CD8-positive, alpha-beta T cell (primary cell): ENCODE measurements at regions of chr15 and their contacts with region 1.

Region 1: GRCh38 chr15:41774062-41774881 is at the start of gene MAPKBP1:
- DNase-seq: peak; percentile 93 to 100 (median 97)
- ATAC-seq: peak; percentile 90
- H3K4me3 ChIP-seq: peak within 1 kb of the TSS; percentile 70 to 91
- H3K4me3 Mint-ChIP-seq: peak within 1 kb of the TSS; percentile 95
- H3K27ac ChIP-seq: peak within 1 kb of the TSS; percentile 45 to 84
- H3K27ac Mint-ChIP-seq: peak within 1 kb of the TSS; percentile 95
- H3K4me1 ChIP-seq: peaks cover 46% of the 10 kb centered on the region
- H3K4me1 Mint-ChIP-seq: peaks cover 60% of the 10 kb centered on the region
- H3K27me3 ChIP-seq: no peaks in the 10 kb centered on the region
- H3K27me3 Mint-ChIP-seq: no peaks in the 10 kb centered on the region
- CTCF ChIP-seq: peak; percentile 47
- total RNA-seq, gene MAPKBP1: 24.2 to 25.3 TPM

Region 2: DNA sequence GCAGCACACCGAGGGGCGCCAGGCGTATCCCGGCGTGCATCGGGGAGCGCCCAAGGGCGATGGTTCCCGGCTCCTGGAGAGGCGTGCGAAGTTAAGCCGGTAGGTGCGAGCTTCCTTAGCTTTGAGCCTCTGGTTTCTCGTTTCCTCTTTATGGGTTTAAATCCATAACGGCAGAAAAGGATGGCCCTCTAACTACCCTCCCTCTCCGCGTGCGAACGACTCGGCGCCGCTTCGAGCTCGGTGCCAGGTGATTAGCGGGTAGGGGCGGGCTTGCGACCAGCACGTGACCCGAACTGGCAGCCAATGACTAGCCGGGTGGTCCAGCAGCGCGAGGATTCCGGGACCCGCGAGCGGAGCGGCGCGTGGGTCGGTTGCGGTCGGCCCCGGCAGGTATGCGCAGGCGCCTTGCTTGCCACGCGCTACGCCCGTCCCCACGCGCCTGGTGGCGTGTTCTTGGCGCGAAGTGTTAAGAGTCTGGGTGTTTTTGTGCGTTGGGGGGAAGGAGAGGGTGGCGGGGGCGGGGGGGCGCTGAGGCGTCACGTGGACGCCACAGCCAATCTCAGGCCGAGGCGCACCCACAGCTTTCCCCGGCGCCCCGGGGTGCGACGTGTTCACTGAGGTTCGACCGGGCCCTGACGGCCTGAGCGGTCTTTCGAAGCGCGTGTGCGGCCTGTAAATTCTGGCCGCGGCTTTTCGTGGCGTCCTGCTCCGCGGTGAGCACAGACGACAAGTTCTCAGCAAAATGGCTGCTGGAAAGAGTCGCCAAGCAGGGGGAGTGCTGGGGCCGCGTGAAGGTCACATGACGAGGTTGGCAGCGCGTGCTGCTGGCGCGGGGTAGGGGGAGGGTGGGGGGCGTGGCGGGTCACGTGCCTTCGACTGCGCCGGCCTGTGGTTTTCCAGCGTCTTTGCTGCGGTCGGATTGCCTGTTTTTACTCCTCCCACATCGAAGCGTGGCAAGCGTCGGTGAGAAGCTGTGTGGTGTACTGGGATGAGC is 152.8 kb before region 1 on chr15:
- CTCF ChIA-PET with region 1: no interaction called
- POLR2A ChIA-PET with region 1: interaction called, 4 read pairs
- intact Hi-C with region 1: loop called in 1 of 2 experiments (anchors 1 kb)
- DNase-seq: peak; percentile 47 to 88 (median 77)
- ATAC-seq: peak; percentile 79
- H3K4me3 ChIP-seq: peak overlapping the region; percentile 39 to 52
- H3K4me3 Mint-ChIP-seq: peak overlapping the region; percentile 72
- H3K27ac ChIP-seq: peak overlapping the region; percentile 11 to 54
- H3K27ac Mint-ChIP-seq: peak overlapping the region; percentile 57
- H3K4me1 ChIP-seq: peaks cover 13% of the 10 kb centered on the region
- H3K4me1 Mint-ChIP-seq: peaks cover 17% of the 10 kb centered on the region
- H3K27me3 ChIP-seq: no peaks in the 10 kb centered on the region
- H3K27me3 Mint-ChIP-seq: no peaks in the 10 kb centered on the region
- CTCF ChIP-seq: no peak

Region 3: DNA sequence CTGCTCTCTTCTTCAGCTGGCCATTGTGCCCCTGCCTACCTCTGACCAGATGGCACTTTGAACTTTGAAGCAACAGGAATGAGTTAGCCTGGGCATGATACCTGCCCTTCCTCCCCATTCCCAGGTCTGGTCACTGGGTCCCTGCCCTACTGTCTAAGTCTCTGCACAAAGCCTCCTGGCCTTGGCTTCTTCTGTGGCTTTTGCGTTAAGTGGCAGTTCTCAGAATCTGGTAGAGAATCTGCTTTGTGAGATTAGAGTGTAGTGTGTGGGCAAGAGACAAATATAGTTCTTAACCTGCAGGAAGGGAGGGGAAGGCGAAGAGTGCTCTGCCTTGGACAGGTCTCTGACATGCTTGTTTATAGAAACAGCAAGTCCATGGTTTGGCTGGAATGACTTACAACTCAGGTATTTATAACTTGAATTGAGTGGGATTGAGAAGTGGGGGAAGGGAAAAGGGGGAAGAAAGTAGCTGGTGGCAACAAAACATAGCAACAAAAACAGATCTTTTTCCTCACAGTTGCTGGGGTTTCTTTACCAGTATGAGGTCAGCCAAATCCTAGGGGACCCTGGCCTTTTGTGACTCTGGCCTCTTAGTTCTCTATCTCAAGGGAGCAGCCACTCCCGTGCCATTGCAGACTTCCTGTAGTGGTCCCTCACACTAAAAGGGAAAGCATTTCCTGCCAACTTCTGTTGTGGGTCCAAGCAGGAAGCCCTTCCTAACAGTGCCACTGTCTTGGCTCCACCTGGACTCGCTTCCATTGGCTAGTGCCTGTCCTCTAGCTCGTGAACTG is 16.7 kb after region 1 on chr15:
- CTCF ChIA-PET with region 1: interaction called, 45 read pairs
- POLR2A ChIA-PET with region 1: interaction called, 4 read pairs
- intact Hi-C with region 1: no loop called
- DNase-seq: no peak
- ATAC-seq: no peak
- H3K4me3 ChIP-seq: no peak overlapping the region
- H3K4me3 Mint-ChIP-seq: no peak overlapping the region
- H3K27ac ChIP-seq: peak overlapping the region in 1 of 2 experiments; percentile 10
- H3K27ac Mint-ChIP-seq: no peak overlapping the region
- H3K4me1 ChIP-seq: peaks cover 32% of the 10 kb centered on the region
- H3K4me1 Mint-ChIP-seq: peaks cover 48% of the 10 kb centered on the region
- H3K27me3 ChIP-seq: no peaks in the 10 kb centered on the region
- H3K27me3 Mint-ChIP-seq: no peaks in the 10 kb centered on the region
- CTCF ChIP-seq: no peak

Region 4: DNA sequence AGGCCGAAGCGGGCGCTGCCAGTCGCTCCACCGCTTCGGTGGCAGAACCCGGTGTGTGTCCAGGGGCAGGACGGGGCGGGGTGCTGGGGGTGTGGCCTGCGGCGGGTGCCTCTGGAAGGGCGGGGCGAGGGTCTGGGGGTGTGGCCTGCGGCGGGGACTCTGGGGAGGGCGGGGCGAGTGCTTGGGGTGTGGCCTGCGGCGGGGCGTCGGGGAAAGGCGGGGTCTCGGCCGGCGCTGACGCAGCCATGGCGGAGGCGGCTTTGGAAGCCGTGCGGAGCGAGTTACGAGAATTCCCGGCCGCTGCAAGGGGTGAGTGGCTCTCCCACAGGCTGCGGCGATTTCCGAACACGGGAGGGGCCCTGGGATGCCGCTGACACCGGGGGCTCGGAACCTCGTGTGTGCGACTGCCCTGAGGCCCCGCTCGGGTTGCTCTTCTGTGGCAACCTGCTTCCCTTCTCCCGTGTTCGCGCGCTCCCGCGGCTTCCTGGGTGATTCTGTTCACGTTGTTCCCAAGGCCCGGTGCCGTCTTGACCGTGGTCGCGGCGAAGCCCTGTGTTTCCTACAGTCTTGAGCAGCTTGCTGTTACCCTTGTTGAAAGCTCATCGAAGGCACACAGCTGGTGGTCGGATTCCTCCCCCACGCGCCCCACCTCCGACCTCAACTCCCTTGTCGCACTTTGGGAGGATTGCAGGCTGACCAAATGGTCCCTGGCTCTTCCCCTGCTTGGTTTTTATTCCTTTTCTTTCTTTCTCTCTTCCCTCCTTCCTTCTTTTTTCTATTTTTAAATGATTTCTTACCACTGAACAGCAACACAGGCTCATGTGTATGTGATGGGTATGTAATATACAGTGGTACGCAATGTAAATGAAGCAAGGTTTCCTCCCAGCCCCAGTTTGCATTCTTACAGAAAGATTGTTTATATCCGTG is 53.9 kb after region 1 on chr15 and contains the start of gene JMJD7:
- CTCF ChIA-PET with region 1: interaction called, 23 read pairs
- POLR2A ChIA-PET with region 1: interaction called, 9 read pairs
- intact Hi-C with region 1: loop called (anchors 1 kb)
- DNase-seq: peak; percentile 93 to 98 (median 95)
- ATAC-seq: peak; percentile 97
- H3K4me3 ChIP-seq: peak within 1 kb of the TSS; percentile 93 to 95
- H3K4me3 Mint-ChIP-seq: peak within 1 kb of the TSS; percentile 83
- H3K27ac ChIP-seq: peak within 1 kb of the TSS; percentile 74 to 87
- H3K27ac Mint-ChIP-seq: peak within 1 kb of the TSS; percentile 87
- H3K4me1 ChIP-seq: peaks cover 35% of the 10 kb centered on the region
- H3K4me1 Mint-ChIP-seq: peaks cover 44% of the 10 kb centered on the region
- H3K27me3 ChIP-seq: no peaks in the 10 kb centered on the region
- H3K27me3 Mint-ChIP-seq: no peaks in the 10 kb centered on the region
- CTCF ChIP-seq: no peak
- total RNA-seq, gene JMJD7: 27.5 to 38.3 TPM

Region 5: GRCh38 chr15:41930221-41930866 is 156.1 kb after region 1 on chr15:
- CTCF ChIA-PET with region 1: interaction called, 34 read pairs
- POLR2A ChIA-PET with region 1: interaction called, 19 read pairs
- intact Hi-C with region 1: loop called in 1 of 2 experiments (anchors 10 kb)
- DNase-seq: peak in 1 of 9 experiments; percentile 21
- ATAC-seq: no peak
- H3K4me3 ChIP-seq: no peak overlapping the region
- H3K4me3 Mint-ChIP-seq: no peak overlapping the region
- H3K27ac ChIP-seq: no peak overlapping the region
- H3K27ac Mint-ChIP-seq: no peak overlapping the region
- H3K4me1 ChIP-seq: peaks cover 30% of the 10 kb centered on the region
- H3K4me1 Mint-ChIP-seq: peaks cover 24% of the 10 kb centered on the region
- H3K27me3 ChIP-seq: no peaks in the 10 kb centered on the region
- H3K27me3 Mint-ChIP-seq: no peaks in the 10 kb centered on the region
- CTCF ChIP-seq: no peak

Region 6: GRCh38 chr15:41989259-41989933 is 215.1 kb after region 1 on chr15:
- CTCF ChIA-PET with region 1: interaction called, 11 read pairs
- POLR2A ChIA-PET with region 1: no interaction called
- intact Hi-C with region 1: no loop called
- DNase-seq: peak; percentile 64 to 88 (median 77)
- ATAC-seq: peak; percentile 99
- H3K4me3 ChIP-seq: no peak overlapping the region
- H3K4me3 Mint-ChIP-seq: no peak overlapping the region
- H3K27ac ChIP-seq: no peak overlapping the region
- H3K27ac Mint-ChIP-seq: no peak overlapping the region
- H3K4me1 ChIP-seq: no peaks in the 10 kb centered on the region
- H3K4me1 Mint-ChIP-seq: no peaks in the 10 kb centered on the region
- H3K27me3 ChIP-seq: peaks cover 0 to 2% of the 10 kb centered on the region in 2 experiments
- H3K27me3 Mint-ChIP-seq: peaks cover 3% of the 10 kb centered on the region
- CTCF ChIP-seq: peak; percentile 90